ENCODE measurements at regions of chr2 and their contacts with region 1.

Region 1: GRCh38 chr2:143128681-143129580 is at the start of gene ARHGAP15:
- DNase-seq: peak; percentile 91
- H3K4me3 ChIP-seq: peak within 1 kb of the TSS; percentile 76
- H3K27ac ChIP-seq: peak within 1 kb of the TSS; percentile 97
- H3K4me1 ChIP-seq: peaks cover 37% of the 10 kb centered on the region
- CTCF ChIP-seq: peak; percentile 63; the same call in 1 of the 2 replicates
- total RNA-seq, gene ARHGAP15: 98.4 and 115 TPM in 2 replicates

Region 2: GRCh38 chr2:143140864-143141661 is 12.1 kb after region 1 on chr2:
- CTCF ChIA-PET with region 1: interaction called, 5 read pairs
- POLR2A ChIA-PET with region 1: interaction called, 156 read pairs
- intact Hi-C with region 1: loop called (anchors 1 kb)
- DNase-seq: peak; percentile 83
- H3K4me3 ChIP-seq: peak overlapping the region; percentile 63
- H3K27ac ChIP-seq: peak overlapping the region; percentile 92
- H3K4me1 ChIP-seq: peaks cover 78% of the 10 kb centered on the region
- CTCF ChIP-seq: no peak

Region 3: GRCh38 chr2:143148757-143149156 is 19.8 kb after region 1 on chr2:
- CTCF ChIA-PET with region 1: no interaction called
- POLR2A ChIA-PET with region 1: interaction called, 156 read pairs
- intact Hi-C with region 1: loop called (anchors 2 kb)
- DNase-seq: no peak
- H3K4me3 ChIP-seq: no peak overlapping the region
- H3K27ac ChIP-seq: no peak overlapping the region
- H3K4me1 ChIP-seq: peaks cover 88% of the 10 kb centered on the region
- CTCF ChIP-seq: no peak

Region 4: DNA sequence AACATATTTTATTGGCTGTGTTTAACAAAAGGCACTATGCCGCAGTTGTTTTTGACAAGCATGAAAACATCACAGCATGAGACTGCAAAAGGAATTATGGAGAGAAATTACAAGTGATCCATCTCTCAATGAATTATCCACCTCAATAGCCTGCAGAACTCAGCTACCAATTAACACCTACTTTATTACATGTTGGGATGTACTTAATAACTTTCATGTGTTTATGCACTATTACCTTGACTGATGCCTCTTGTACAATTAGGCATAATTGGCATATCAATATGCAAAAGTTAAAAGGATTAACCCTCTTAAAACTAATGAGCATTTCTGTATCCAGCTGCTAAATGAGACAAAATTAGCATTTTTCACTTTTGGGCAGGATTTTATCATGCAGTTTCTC is 28.1 kb after region 1 on chr2:
- CTCF ChIA-PET with region 1: interaction called, 3 read pairs
- POLR2A ChIA-PET with region 1: interaction called, 11 read pairs
- intact Hi-C with region 1: loop called (anchors 2 kb)
- DNase-seq: no peak
- H3K4me3 ChIP-seq: no peak overlapping the region
- H3K27ac ChIP-seq: no peak overlapping the region
- H3K4me1 ChIP-seq: peaks cover 82% of the 10 kb centered on the region
- CTCF ChIP-seq: no peak

Region 5: GRCh38 chr2:143321994-143322393 is 193.1 kb after region 1 on chr2:
- CTCF ChIA-PET with region 1: no interaction called
- POLR2A ChIA-PET with region 1: no interaction called
- intact Hi-C with region 1: no loop called
- DNase-seq: no peak
- H3K4me3 ChIP-seq: no peak overlapping the region
- H3K27ac ChIP-seq: no peak overlapping the region
- H3K4me1 ChIP-seq: no peaks in the 10 kb centered on the region
- CTCF ChIP-seq: no peak

Region 6: DNA sequence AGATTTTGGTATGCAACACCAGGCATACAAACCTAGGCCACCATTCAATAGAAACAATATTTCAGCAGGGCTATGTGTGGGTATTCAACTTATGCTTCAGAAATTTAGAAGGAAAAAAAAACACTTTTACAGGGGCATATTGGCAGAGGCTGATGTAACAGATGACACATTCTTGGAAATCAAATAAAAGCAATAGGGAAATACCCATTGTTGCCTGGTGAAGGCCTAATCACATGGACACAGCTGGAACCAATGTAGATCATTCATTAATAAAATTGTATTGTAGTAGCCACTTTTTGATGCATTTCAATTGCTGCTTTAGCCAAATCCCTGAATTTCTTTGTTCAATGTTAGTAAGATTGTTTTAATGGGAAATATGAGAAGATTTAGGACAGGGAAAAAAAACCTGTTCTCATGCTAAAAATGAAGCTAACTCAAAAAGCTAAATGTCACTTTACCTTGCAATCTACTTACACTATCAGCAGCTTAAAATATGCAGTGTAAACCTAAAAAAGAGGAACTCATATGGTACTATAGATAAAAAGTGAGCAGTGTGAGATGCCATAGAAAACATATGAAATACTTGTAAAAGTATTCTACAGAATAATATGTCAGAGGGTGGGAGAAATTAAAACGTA is 1101.6 kb after region 1 on chr2:
- CTCF ChIA-PET with region 1: no interaction called
- POLR2A ChIA-PET with region 1: no interaction called
- intact Hi-C with region 1: loop called (anchors 10 kb)
- DNase-seq: no peak
- H3K4me3 ChIP-seq: no peak overlapping the region
- H3K27ac ChIP-seq: no peak overlapping the region
- H3K4me1 ChIP-seq: peaks cover 39% of the 10 kb centered on the region
- CTCF ChIP-seq: no peak

Measured in OCI-LY7 (cell line).